Dorsolateral prefrontal cortex (tissue), 120 donors: ENCODE measurements at regions of chr3 and their contacts with region 1.

Region 1: GRCh38 chr3:100708967-100709841 is at the start of gene TFG:
- DNase-seq: peak; percentile 93 to 97 (median 96)
- H3K4me3 ChIP-seq: peak within 1 kb of the TSS; percentile 64 to 96 (median 84)
- H3K27ac ChIP-seq: peak within 1 kb of the TSS; percentile 58 to 98 (median 91)
- H3K27me3 ChIP-seq: peaks cover 0 to 31% (median 4%) of the 10 kb centered on the region in 45 donors
- CTCF ChIP-seq: peak in 27 of 56 donors; percentile 4 to 59 (median 24)
- total RNA-seq, gene TFG: 41.0 to 73.8 (median 62.2) TPM

Region 2: DNA sequence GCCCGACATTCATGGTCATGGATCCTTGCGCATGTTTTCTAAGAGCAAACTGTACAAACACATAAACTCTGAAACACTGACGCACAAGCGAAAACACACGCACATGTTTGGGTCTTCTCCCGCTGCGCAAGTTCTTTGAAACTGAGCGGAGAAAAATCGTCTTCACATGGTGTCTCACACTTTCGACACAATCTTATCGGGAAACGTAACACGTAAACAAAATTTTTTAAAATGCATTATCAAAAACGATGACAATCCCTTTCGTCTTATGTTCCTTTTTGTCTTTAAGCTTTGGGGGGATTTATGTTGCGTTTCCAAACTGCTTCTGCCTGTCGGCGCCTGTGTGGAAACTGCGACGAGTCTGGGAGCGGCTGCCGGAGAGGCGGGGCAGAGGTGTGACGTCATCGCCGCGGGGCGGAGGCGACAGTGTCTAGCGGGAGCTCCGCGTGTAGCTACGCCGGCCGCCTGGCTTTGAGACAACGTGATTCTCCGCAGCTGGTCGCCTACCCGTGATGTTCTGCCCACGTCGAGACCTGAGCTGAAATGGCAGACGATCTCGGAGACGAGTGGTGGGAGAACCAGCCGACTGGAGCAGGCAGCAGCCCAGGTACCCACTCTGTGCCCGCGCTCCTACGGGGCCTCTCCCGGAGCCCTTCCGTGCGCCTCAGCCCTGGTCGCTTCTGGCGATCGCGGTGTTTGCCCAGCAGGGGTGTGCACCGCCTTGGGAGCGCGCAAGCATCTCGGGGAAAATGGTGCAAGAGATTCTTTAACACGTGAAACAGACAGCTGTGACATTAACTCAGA is 891.6 kb before region 1 on chr3 and contains the start of gene CMSS1:
- intact Hi-C with region 1: loop called in 1 of 2 experiments (anchors 10 kb)
- DNase-seq: peak; percentile 89 to 97 (median 94)
- H3K4me3 ChIP-seq: peak within 1 kb of the TSS; percentile 54 to 98 (median 87)
- H3K27ac ChIP-seq: peak within 1 kb of the TSS in 58 of 59 donors; percentile 14 to 95 (median 87)
- H3K27me3 ChIP-seq: no peaks in the 10 kb centered on the region
- CTCF ChIP-seq: peak in 29 of 56 donors; percentile 6 to 54 (median 28)
- total RNA-seq, gene CMSS1: 13.7 to 69.0 (median 39.0) TPM

Region 3: DNA sequence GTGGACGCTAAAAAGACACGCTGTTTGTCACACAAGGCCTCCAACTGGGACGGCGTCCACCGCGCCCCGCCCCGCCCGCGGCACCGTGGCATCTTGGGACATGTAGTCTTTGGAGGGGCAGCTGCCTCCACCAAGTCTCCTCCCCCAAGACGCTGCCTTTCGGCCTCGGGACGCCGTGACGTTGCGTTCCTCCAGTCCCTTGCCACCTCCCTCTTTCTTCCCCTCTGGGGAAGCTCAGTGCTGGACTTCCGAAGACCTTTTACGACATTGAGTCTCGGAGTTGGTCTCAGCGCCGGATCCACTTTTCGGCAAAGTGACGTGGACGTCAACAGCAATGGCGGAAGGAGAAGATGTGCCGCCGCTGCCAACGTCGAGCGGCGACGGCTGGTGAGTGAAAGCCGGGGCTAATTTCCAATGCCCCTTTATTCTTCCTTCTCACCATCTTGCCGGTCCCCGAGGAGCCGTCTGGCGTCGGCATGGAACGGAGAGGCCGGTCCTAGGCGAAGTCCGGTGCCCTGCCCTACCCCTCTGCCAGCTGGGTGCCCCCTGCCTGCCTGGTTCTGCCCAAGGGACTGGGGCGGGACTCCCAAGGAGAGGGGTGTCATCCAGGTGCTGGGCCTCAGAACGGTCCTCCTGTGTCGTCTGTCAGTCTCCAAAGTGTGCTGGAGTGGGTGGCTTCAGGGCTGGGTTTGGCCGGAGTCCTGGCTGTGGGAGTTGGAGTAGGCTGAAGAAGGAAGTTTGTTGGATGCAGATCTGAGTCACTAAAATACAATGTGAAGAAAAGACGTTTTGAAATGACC is 448.3 kb before region 1 on chr3 and contains the start of gene TBC1D23:
- intact Hi-C with region 1: loop called (anchors 5 to 10 kb)
- DNase-seq: peak; percentile 96 to 99 (median 99)
- H3K4me3 ChIP-seq: peak within 1 kb of the TSS; percentile 71 to 100 (median 97)
- H3K27ac ChIP-seq: peak within 1 kb of the TSS; percentile 61 to 99 (median 93)
- H3K27me3 ChIP-seq: no peaks in the 10 kb centered on the region
- CTCF ChIP-seq: peak in 30 of 56 donors; percentile 4 to 52 (median 29)
- total RNA-seq, gene TBC1D23: 30.8 to 54.2 (median 41.1) TPM

Region 4: DNA sequence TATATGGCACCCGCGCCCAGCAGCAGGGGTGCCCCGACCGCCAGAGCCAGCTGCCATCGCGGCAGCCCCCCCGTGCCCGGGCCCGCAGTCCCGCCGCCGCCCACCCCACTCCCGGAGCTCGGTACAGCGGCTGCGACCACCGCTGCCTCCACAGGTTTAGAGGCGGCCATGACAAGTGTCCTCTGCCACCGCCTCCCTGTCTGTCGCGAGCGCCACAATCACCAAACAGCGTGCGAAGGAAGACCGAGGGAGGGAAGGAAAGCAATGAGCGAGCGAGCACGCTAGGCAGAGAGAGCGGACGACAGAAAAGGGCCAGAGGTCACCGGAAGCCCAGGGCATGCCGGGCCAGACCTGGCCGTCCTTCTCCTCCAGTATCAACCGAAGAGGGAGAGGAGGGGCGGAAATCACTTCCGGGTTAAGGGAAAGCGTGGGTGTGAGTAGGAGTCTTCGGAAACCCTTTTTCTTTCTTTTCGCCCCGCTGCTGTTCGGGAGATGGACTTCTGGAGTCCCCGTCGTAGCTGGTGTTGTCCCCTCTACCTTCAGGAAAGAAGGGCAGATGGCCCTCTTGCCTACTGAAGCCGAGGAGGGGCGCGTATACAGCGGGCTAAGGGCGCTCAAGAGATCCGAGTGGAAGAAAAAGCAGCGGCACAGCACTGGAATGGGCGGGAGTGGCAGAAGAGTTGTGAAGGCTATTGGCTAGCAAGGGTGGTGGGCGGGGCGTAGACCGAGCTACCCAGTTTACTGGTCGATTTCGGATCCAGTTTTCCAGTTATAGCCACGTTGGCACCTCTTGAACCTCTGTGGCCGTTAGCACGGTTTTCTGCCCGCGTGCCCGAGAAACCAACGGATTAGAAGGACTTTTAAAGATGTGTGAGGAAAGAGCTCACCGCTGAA is 308.2 kb before region 1 on chr3 and contains the starts of genes LNP1 and TOMM70:
- intact Hi-C with region 1: loop called in 1 of 2 experiments (anchors 5 kb)
- DNase-seq: peak; percentile 94 to 99 (median 98)
- H3K4me3 ChIP-seq: peak within 1 kb of the TSS; percentile 78 to 100 (median 94)
- H3K27ac ChIP-seq: peak within 1 kb of the TSS; percentile 7 to 95 (median 87)
- H3K27me3 ChIP-seq: no peaks in the 10 kb centered on the region
- CTCF ChIP-seq: peak in 14 of 56 donors; percentile 0 to 49 (median 20)
- total RNA-seq, gene LNP1: 4.3 to 16.9 (median 9.5) TPM
- total RNA-seq, gene TOMM70: 24.6 to 81.5 (median 58.4) TPM

Region 5: GRCh38 chr3:100492059-100493006 is 216.9 kb before region 1 on chr3 and contains the start of gene TMEM45A:
- intact Hi-C with region 1: loop called in 1 of 2 experiments (anchors 10 kb)
- DNase-seq: peak; percentile 83 to 98 (median 94)
- H3K4me3 ChIP-seq: peak within 1 kb of the TSS; percentile 44 to 85 (median 71)
- H3K27ac ChIP-seq: peak within 1 kb of the TSS in 50 of 59 donors; percentile 15 to 90 (median 62)
- H3K27me3 ChIP-seq: no peaks in the 10 kb centered on the region
- CTCF ChIP-seq: peak in 30 of 56 donors; percentile 9 to 61 (median 34)
- total RNA-seq, gene TMEM45A: 0.58 to 7.3 (median 2.3) TPM

Region 6: DNA sequence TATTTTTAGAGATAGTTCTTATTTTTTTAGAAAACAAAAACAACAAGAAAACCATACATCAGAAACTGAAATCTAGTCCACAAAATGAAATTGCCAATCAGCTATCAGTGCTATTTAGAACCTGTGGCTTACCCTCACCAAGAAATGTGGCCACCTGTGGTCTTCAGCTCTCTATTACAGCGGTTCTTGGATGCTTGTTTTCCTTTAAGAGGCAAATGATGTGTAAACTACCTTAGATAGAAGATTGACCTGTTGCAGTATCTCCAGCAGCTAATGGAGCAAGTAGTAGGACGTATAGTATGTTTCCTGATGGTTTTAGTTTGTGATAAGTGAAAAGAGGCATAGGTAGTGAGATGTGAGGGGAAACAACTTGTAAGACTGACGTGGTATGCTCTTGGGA is 21.3 kb after region 1 on chr3:
- intact Hi-C with region 1: no loop called
- DNase-seq: no peak
- H3K4me3 ChIP-seq: no peak overlapping the region
- H3K27ac ChIP-seq: no peak overlapping the region
- H3K27me3 ChIP-seq: no peaks in the 10 kb centered on the region
- CTCF ChIP-seq: no peak

Region 7: GRCh38 chr3:100833483-100833882 is 124.3 kb after region 1 on chr3:
- intact Hi-C with region 1: no loop called
- DNase-seq: peak in 1 of 10 donors; percentile 45
- H3K4me3 ChIP-seq: no peak overlapping the region
- H3K27ac ChIP-seq: no peak overlapping the region
- H3K27me3 ChIP-seq: peaks cover 0 to 12% (median 0%) of the 10 kb centered on the region in 45 donors
- CTCF ChIP-seq: no peak

Region 8: GRCh38 chr3:101676765-101677435 is 967.7 kb after region 1 on chr3 and contains the start of gene ZBTB11:
- intact Hi-C with region 1: loop called in 1 of 2 experiments (anchors 5 kb)
- DNase-seq: peak; percentile 98 to 100 (median 99)
- H3K4me3 ChIP-seq: peak within 1 kb of the TSS; percentile 72 to 100 (median 91)
- H3K27ac ChIP-seq: peak within 1 kb of the TSS; percentile 85 to 99 (median 94)
- H3K27me3 ChIP-seq: no peaks in the 10 kb centered on the region
- CTCF ChIP-seq: peak in 55 of 56 donors; percentile 20 to 75 (median 58)
- total RNA-seq, gene ZBTB11: 19.8 to 44.1 (median 29.6) TPM